ENCODE measurements at regions of chr19 and their contacts with region 1.

Region 1: GRCh38 chr19:10580979-10581631 is 6.0 kb downstream of the AP1M2 start:
- DNase-seq: peak; percentile 81
- H3K4me3 Mint-ChIP-seq: no peak overlapping the region
- H3K27ac Mint-ChIP-seq: no peak overlapping the region
- H3K4me1 Mint-ChIP-seq: peaks cover 17% of the 10 kb centered on the region
- H3K27me3 Mint-ChIP-seq: peaks cover 8% of the 10 kb centered on the region

Region 2: DNA sequence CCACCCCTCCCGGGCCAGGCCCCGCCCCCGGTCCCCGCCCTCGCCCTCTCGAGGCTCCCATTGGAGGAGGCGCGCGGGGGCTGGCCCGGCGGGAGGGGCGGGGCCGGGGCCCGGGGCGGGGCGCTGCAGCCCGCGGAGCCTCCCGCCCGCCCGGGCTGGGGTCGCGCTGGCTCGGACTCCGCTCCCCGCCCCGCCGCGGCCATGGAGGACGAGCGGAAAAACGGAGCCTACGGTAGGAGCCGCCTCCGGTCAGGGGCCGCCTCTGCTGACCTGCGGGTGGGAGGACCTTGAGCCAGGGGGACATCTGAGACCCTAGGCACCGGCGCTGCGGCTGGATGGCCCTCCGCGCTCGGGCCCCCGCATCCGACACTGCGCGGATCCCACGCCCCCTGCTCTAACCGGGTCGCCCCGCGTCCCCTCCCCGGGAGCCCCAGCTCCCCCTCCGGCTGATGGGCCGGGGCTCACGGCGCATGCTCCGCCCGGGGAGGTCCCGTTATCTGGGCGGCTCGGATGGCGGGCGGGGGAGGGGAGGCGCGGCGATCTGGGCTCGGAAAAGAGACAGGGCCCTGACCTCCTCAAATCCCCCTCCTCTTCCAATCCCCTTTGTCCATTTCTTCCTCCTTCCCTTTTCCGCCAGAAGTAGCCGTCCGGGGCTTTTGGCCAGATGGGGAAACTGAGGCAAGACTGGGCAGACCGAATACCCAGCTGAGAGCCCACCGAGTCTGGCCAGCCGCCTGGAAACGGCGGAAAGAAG is 21.4 kb after region 1 on chr19:
- intact Hi-C with region 1: loop called (anchors 2 kb)
- DNase-seq: peak; percentile 78
- H3K4me3 Mint-ChIP-seq: peak overlapping the region; percentile 97
- H3K27ac Mint-ChIP-seq: peak overlapping the region; percentile 100
- H3K4me1 Mint-ChIP-seq: peaks cover 16% of the 10 kb centered on the region
- H3K27me3 Mint-ChIP-seq: peaks cover 1% of the 10 kb centered on the region

Region 3: GRCh38 chr19:10644260-10645007 is 63.3 kb after region 1 on chr19:
- intact Hi-C with region 1: loop called (anchors 1 kb)
- DNase-seq: peak; percentile 71
- H3K4me3 Mint-ChIP-seq: no peak overlapping the region
- H3K27ac Mint-ChIP-seq: no peak overlapping the region
- H3K4me1 Mint-ChIP-seq: peaks cover 14% of the 10 kb centered on the region
- H3K27me3 Mint-ChIP-seq: no peaks in the 10 kb centered on the region

Region 4: DNA sequence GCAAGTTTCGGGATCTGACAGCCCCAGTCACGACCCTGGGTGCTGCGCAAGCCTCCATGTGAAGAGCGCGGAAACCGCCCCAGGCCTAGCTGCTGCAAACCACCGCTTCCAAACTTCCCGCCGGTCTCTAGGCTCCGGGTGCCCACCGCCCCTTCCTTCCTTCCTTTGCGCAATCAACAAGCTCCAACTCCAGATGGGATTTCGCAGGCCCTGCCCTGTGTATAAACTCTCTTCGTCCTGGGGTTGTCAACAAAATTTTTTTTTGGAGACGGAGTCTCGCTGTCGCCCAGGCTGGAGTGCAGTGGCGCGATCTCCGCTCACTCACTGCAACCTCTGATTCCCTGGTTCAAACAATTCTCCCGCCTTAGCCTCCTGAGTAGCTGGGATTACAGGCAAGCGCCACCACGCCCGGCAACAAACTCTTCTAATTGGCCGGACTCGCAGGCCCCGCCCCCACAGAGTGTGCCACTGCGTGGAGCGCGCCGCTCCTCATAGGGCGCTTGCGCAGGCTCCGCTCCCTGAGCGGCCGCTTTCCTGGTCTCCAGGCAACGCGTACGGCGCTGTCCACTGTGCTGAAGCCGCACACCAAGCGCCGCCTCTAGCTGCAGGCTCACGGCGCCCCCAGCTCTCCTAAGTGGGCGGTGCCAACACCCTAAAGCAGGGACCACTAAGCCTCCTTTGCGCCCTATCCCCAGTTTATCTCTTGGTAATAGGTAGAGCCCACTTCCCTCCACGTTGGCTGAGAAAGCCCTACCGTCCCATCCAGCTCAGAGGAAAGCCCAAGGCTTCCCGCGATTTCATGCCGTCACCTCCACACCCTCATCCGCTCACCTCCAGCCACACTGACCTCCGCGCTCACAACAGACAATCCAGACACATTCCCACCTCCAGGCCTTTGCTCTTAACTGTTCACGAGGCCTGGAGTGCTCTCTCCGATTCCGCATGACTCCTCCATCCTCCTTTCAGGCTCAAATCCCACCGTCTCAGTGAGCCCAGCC is 114.6 kb after region 1 on chr19:
- intact Hi-C with region 1: loop called (anchors 1 kb)
- DNase-seq: peak; percentile 90
- H3K4me3 Mint-ChIP-seq: peak overlapping the region; percentile 82
- H3K27ac Mint-ChIP-seq: no peak overlapping the region
- H3K4me1 Mint-ChIP-seq: peaks cover 8% of the 10 kb centered on the region
- H3K27me3 Mint-ChIP-seq: no peaks in the 10 kb centered on the region